ENCODE measurements at regions of chr14 and their contacts with region 1.

Region 1: DNA sequence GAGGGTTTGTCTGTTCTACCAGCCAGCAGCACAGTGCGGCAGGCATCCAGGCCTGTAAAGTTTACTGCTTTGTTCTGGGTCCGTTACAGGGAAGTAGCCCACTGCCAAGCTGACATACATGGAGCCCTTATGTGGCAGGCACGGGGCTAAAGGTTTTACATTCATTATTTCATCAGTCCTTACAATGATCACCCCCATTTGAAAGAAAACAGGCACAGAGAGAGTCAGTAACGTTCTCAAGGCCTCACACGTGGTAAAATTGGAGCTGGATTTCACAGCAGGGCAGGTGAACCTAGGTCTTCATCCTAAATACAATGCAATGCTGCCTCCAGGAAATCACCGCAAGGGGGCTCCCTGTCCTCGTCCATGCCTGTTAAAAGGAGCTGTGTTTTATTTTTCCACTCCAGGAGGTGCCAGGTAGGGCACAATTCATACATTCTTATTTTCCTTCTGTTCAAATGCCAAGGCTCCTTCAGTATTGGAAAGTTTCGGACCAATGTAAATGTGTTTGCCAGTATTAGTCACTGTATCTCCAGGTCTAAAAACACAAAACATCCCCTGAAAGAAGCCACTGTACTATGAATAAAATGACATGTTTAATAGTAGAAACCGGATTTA is 172.2 kb upstream of the GZMB start:
- DNase-seq: peak; percentile 87
- ATAC-seq: peak; percentile 91
- H3K4me3 Mint-ChIP-seq: no peak overlapping the region
- H3K27ac Mint-ChIP-seq: no peak overlapping the region
- H3K4me1 Mint-ChIP-seq: peaks cover 7% of the 10 kb centered on the region
- H3K27me3 Mint-ChIP-seq: no peaks in the 10 kb centered on the region
- CTCF ChIP-seq: peak; percentile 84

Region 2: GRCh38 chr14:24734878-24735500 is 71.2 kb before region 1 on chr14:
- CTCF ChIA-PET with region 1: interaction called, 12 read pairs
- POLR2A ChIA-PET with region 1: no interaction called
- DNase-seq: peak; percentile 17
- ATAC-seq: peak; percentile 78
- H3K4me3 Mint-ChIP-seq: no peak overlapping the region
- H3K27ac Mint-ChIP-seq: no peak overlapping the region
- H3K4me1 Mint-ChIP-seq: peaks cover 18% of the 10 kb centered on the region
- H3K27me3 Mint-ChIP-seq: no peaks in the 10 kb centered on the region; the same call in 1 of the 2 replicates
- CTCF ChIP-seq: peak; percentile 56

Region 3: GRCh38 chr14:24777678-24778077 is 28.5 kb before region 1 on chr14:
- CTCF ChIA-PET with region 1: interaction called, 10 read pairs
- POLR2A ChIA-PET with region 1: no interaction called
- DNase-seq: no peak
- ATAC-seq: no peak
- H3K4me3 Mint-ChIP-seq: no peak overlapping the region
- H3K27ac Mint-ChIP-seq: no peak overlapping the region
- H3K4me1 Mint-ChIP-seq: peaks cover 27% of the 10 kb centered on the region
- H3K27me3 Mint-ChIP-seq: no peaks in the 10 kb centered on the region; the same call in 1 of the 2 replicates
- CTCF ChIP-seq: no peak

Region 4: DNA sequence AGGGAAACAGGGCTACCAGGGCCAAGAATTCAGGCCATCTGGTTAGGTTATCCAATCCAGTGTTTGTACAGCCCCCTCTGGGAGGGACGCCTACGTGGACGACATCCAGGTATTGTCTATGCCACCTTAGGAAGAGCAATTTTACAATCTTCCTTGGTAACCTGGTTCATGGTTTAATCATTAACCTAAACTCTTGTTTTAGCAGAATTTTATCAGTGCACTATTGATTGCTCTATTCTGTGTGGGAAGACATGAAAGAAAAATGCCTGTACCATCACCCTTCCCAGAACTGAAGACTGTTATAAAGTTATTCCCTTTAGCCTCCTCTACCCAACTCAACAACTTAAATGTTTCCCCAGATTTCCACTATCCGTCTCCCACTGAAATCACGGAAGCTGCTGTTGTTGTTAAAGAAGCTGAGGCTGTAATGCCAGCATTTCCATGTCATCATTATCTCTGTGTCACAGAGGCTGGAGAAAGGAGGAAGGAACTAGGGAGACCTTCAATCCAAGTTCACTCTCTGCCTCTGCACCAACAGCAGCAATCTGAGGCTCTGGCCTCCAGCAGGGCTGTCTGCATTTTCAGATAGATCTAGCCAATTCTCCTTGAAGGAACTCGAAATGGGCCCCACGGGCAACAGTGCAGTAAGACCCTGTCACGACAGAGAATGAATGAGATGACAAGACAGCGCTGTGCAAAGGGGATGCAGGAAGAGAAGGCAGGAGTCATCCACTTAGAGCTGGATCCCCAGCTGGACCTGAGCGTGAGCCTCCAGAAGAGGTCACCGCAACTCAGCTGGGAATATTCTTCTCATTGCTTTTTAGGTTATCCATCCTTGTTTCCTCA is 11.3 kb after region 1 on chr14:
- CTCF ChIA-PET with region 1: interaction called, 25 read pairs
- POLR2A ChIA-PET with region 1: no interaction called
- DNase-seq: no peak
- ATAC-seq: peak; percentile 59
- H3K4me3 Mint-ChIP-seq: no peak overlapping the region
- H3K27ac Mint-ChIP-seq: no peak overlapping the region
- H3K4me1 Mint-ChIP-seq: peaks cover 1% of the 10 kb centered on the region
- H3K27me3 Mint-ChIP-seq: no peaks in the 10 kb centered on the region
- CTCF ChIP-seq: no peak

Region 5: DNA sequence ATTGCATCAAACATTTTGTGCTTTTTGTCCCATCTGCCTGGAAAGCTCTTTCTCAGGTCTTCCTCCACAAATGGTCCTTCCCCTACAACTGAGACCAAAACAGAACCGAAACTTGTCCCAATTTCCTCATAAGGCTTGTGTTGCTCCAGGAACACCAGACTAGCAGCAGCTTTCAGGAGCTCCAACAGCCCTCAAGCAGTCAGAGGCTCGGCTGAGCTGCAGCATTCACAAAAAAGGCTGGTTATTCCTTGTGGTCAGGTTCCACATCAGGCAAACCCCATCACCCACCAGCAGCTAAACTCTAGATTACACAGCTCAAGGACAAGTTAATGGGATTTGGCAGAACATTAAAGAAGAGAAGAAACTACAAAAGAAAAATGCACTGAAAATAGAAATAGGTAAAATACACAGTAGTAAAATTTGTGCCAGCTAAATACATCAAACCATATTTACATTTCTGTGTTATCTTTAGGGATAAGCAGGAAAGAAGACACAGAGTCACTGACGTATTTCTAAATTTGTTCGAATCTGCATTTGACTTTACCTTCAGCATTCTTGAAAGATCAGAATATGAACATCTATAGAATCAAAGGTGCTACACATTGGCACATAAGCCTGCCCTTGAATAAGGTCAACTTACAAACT is 102.5 kb after region 1 on chr14:
- CTCF ChIA-PET with region 1: no interaction called
- POLR2A ChIA-PET with region 1: no interaction called
- DNase-seq: no peak
- ATAC-seq: no peak
- H3K4me3 Mint-ChIP-seq: no peak overlapping the region
- H3K27ac Mint-ChIP-seq: no peak overlapping the region
- H3K4me1 Mint-ChIP-seq: no peaks in the 10 kb centered on the region
- H3K27me3 Mint-ChIP-seq: no peaks in the 10 kb centered on the region
- CTCF ChIP-seq: no peak

Region 6: GRCh38 chr14:25049568-25050268 is 243.5 kb after region 1 on chr14 and contains the start of gene STXBP6:
- CTCF ChIA-PET with region 1: interaction called, 30 read pairs
- POLR2A ChIA-PET with region 1: interaction called, 4 read pairs
- DNase-seq: peak; percentile 74
- ATAC-seq: peak; percentile 75
- H3K4me3 Mint-ChIP-seq: peak within 1 kb of the TSS; percentile 85
- H3K27ac Mint-ChIP-seq: no peak within 1 kb of the TSS
- H3K4me1 Mint-ChIP-seq: peaks cover 32% of the 10 kb centered on the region
- H3K27me3 Mint-ChIP-seq: peaks cover 58% of the 10 kb centered on the region
- CTCF ChIP-seq: no peak
- total RNA-seq, gene STXBP6: 3.2 to 4.2 TPM (median 3.5 TPM) in 3 replicates

Region 7: DNA sequence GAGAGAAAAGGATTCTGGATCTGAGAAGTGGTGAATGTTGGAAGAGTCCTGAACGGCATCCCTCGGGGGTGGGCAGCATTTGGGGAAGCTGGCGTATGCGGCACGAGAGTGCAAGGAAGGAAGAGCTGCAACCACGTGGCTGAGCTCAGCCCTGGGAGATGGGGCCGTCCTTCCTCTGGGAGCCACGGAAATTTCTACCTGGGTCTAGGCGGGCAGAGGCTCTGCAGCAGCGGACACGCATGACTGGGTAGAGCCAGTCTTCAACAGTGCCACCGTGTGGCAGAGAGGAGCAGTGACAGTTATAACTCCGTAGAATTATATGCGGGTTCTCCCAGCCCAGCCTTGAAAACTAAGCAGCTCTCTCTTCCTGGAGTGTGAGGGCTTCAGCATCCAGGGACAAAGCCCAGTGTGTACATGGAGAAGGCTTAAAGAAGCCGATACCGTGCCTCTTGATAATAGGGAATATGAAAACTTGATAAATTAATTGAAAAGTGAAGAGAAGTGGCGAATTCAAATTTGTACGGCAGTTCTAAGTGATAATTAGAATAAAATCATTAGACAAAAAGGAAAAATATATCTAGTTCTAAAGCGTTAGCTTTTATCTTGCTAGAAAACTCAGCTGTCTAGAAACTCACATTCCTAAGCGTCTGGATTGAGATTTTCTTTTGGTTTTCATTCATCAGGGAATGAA is 326.7 kb after region 1 on chr14:
- CTCF ChIA-PET with region 1: interaction called, 75 read pairs
- POLR2A ChIA-PET with region 1: no interaction called
- DNase-seq: peak; percentile 76
- ATAC-seq: peak; percentile 97
- H3K4me3 Mint-ChIP-seq: peak overlapping the region; percentile 34
- H3K27ac Mint-ChIP-seq: no peak overlapping the region
- H3K4me1 Mint-ChIP-seq: peaks cover 4% of the 10 kb centered on the region
- H3K27me3 Mint-ChIP-seq: peaks cover 24% of the 10 kb centered on the region
- CTCF ChIP-seq: peak; percentile 68

Region 8: GRCh38 chr14:25400607-25401206 is 594.5 kb after region 1 on chr14:
- CTCF ChIA-PET with region 1: interaction called, 13 read pairs
- POLR2A ChIA-PET with region 1: no interaction called
- DNase-seq: peak; percentile 49
- ATAC-seq: peak; percentile 59
- H3K4me3 Mint-ChIP-seq: no peak overlapping the region
- H3K27ac Mint-ChIP-seq: no peak overlapping the region
- H3K4me1 Mint-ChIP-seq: peaks cover 6% of the 10 kb centered on the region
- H3K27me3 Mint-ChIP-seq: no peaks in the 10 kb centered on the region
- CTCF ChIP-seq: peak; percentile 58

Measured in WTC11 (cell line).